ENCODE measurements at regions of chr12 and their contacts with region 1.

Region 1: GRCh38 chr12:75390899-75391538 is at the start of gene GLIPR1L2:
- DNase-seq: peak; percentile 95
- H3K4me3 Mint-ChIP-seq: peak within 1 kb of the TSS; percentile 86
- H3K27ac Mint-ChIP-seq: peak within 1 kb of the TSS; percentile 93
- H3K4me1 Mint-ChIP-seq: peaks cover 40% of the 10 kb centered on the region
- H3K27me3 Mint-ChIP-seq: no peaks in the 10 kb centered on the region
- total RNA-seq, gene GLIPR1L2: 0.17 to 0.24 TPM

Region 2: DNA sequence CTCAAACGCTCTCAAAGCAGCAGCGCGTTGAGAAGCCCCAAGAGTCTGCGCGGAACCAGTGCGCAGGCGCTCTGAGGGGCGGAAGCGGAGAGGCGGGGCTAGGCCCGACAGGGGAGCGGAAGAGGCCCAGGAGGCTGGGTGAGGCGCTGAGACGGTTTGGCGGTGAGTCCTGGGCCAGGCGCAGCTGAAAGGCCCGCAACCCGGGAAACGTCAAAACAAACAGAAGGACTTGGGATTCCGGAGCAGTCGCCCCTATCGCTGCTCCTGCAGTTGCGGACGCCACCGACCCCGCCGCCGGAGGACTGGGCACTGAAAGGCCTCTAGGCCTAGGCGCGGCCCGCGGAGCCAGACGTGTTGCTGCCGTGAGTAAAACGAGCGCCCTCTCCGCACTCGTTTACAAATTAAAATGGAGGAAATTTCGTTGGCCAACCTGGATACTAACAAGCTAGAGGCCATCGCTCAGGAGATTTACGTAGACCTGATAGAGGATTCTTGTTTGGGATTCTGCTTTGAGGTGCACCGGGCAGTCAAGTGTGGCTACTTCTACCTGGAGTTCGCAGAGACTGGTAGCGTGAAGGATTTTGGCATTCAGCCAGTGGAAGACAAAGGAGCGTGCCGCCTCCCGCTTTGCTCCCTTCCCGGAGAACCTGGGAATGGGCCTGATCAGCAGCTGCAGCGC is 853.2 kb before region 1 on chr12 and contains the start of gene ATXN7L3B:
- CTCF ChIA-PET with region 1: no interaction called
- POLR2A ChIA-PET with region 1: no interaction called
- intact Hi-C with region 1: loop called (anchors 5 kb)
- DNase-seq: peak; percentile 97
- H3K4me3 Mint-ChIP-seq: peak within 1 kb of the TSS; percentile 92
- H3K27ac Mint-ChIP-seq: peak within 1 kb of the TSS; percentile 94
- H3K4me1 Mint-ChIP-seq: peaks cover 48% of the 10 kb centered on the region
- H3K27me3 Mint-ChIP-seq: no peaks in the 10 kb centered on the region
- total RNA-seq, gene ATXN7L3B: 16.7 to 17.0 TPM

Region 3: GRCh38 chr12:75334384-75335030 is 56.5 kb before region 1 on chr12 and contains the start of gene GLIPR1L1:
- CTCF ChIA-PET with region 1: interaction called, 15 read pairs
- POLR2A ChIA-PET with region 1: no interaction called
- intact Hi-C with region 1: loop called (anchors 1 kb)
- DNase-seq: peak; percentile 88
- H3K4me3 Mint-ChIP-seq: peak within 1 kb of the TSS; percentile 59
- H3K27ac Mint-ChIP-seq: no peak within 1 kb of the TSS
- H3K4me1 Mint-ChIP-seq: peaks cover 22% of the 10 kb centered on the region
- H3K27me3 Mint-ChIP-seq: peaks cover 16% of the 10 kb centered on the region
- total RNA-seq, gene GLIPR1L1: not detected

Region 4: GRCh38 chr12:75341832-75342231 is 49.2 kb before region 1 on chr12:
- CTCF ChIA-PET with region 1: no interaction called
- POLR2A ChIA-PET with region 1: no interaction called
- intact Hi-C with region 1: loop called (anchors 1 kb)
- DNase-seq: no peak
- H3K4me3 Mint-ChIP-seq: no peak overlapping the region
- H3K27ac Mint-ChIP-seq: no peak overlapping the region
- H3K4me1 Mint-ChIP-seq: peaks cover 12% of the 10 kb centered on the region
- H3K27me3 Mint-ChIP-seq: peaks cover 12% of the 10 kb centered on the region

Region 5: DNA sequence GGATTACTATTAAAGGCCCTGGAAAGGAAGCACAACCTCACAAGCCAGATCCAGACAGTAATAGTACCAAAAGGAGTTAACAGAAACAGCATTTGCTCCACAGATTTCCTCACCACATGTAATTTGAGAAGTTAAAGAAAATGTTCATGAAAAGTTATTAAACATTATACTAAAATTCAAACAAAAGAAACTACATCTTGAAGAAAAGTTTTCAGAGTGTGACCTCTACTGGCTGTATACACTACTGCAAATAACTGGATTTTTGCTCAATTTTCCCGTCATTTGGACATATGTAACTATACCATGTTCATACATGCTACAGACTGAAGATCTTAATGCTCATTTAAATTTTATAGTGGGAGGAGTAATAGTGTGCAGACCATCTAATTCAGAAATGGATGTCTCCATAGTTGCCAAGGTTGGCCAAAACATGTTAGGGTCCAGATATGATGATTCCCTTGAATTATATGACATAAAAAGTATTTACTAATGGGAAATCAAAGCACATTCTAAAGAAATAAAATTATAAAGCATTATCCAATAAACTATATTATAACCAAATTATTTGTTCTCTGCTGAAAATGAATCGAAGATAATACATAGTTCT is 114.8 kb after region 1 on chr12:
- CTCF ChIA-PET with region 1: interaction called, 8 read pairs
- POLR2A ChIA-PET with region 1: interaction called, 4 read pairs
- intact Hi-C with region 1: loop called (anchors 1 kb)
- DNase-seq: no peak
- H3K4me3 Mint-ChIP-seq: no peak overlapping the region
- H3K27ac Mint-ChIP-seq: no peak overlapping the region
- H3K4me1 Mint-ChIP-seq: peaks cover 26% of the 10 kb centered on the region
- H3K27me3 Mint-ChIP-seq: no peaks in the 10 kb centered on the region